CD4-positive, alpha-beta memory T cell (primary cell): ENCODE measurements at regions of chr21 and their contacts with region 1.

Region 1: GRCh38 chr21:40143822-40144525 is 276.7 kb downstream of the PCP4 start:
- DNase-seq: peak in 1 of 5 donors; percentile 3
- H3K4me3 ChIP-seq: no peak overlapping the region
- H3K4me3 Mint-ChIP-seq: no peak overlapping the region
- H3K27ac ChIP-seq: no peak overlapping the region
- H3K27ac Mint-ChIP-seq: no peak overlapping the region
- H3K4me1 ChIP-seq: no peaks in the 10 kb centered on the region
- H3K4me1 Mint-ChIP-seq: no peaks in the 10 kb centered on the region
- H3K27me3 ChIP-seq: no peaks in the 10 kb centered on the region
- H3K27me3 Mint-ChIP-seq: peaks cover 0 to 2% of the 10 kb centered on the region in 2 donors

Region 2: DNA sequence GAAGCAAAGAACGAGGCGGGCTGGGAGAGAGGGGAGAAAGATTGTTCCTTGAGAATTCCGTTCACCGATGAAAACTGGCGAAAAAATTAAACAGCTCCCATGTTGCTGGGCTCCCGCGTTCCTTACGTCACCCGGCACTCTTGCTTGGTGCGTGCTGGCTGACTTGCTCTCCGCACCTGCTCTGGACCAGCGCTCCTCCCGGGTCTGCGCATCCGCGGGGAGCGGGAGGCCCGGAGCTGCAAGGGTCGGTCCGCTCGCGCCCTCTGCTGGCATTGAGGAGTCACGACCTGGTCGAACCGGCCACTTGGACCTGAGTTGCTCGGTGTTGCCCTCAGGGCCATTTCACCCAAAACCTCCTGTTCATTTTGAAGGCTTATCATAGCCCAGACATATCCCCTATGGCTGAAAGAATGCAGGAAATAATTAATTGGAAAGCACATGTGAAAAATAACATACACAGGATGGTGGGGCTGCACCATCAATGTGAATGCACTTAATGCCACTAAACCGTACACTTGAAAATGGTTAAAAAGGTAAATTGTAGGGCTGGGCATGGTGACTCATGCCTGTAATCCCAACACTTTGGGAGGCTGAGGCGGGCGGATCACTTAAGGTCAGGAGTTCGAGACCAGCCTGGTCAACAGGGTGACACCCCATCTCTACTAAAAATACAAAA is 925.1 kb after region 1 on chr21:
- CTCF ChIA-PET with region 1: no interaction called
- POLR2A ChIA-PET with region 1: no interaction called
- intact Hi-C with region 1: loop called (anchors 5 kb)
- DNase-seq: peak; percentile 24 to 42 (median 28)
- H3K4me3 ChIP-seq: no peak overlapping the region
- H3K4me3 Mint-ChIP-seq: peak overlapping the region; percentile 41 to 86 (median 74)
- H3K27ac ChIP-seq: no peak overlapping the region
- H3K27ac Mint-ChIP-seq: no peak overlapping the region
- H3K4me1 ChIP-seq: peaks cover 5% of the 10 kb centered on the region
- H3K4me1 Mint-ChIP-seq: peaks cover 4 to 15% (median 8%) of the 10 kb centered on the region in 4 donors
- H3K27me3 ChIP-seq: no peaks in the 10 kb centered on the region
- H3K27me3 Mint-ChIP-seq: peaks cover 21 to 23% of the 10 kb centered on the region in 2 donors